AG04450 (cell line): ENCODE measurements at regions of chr1 and their contacts with region 1.

Region 1: DNA sequence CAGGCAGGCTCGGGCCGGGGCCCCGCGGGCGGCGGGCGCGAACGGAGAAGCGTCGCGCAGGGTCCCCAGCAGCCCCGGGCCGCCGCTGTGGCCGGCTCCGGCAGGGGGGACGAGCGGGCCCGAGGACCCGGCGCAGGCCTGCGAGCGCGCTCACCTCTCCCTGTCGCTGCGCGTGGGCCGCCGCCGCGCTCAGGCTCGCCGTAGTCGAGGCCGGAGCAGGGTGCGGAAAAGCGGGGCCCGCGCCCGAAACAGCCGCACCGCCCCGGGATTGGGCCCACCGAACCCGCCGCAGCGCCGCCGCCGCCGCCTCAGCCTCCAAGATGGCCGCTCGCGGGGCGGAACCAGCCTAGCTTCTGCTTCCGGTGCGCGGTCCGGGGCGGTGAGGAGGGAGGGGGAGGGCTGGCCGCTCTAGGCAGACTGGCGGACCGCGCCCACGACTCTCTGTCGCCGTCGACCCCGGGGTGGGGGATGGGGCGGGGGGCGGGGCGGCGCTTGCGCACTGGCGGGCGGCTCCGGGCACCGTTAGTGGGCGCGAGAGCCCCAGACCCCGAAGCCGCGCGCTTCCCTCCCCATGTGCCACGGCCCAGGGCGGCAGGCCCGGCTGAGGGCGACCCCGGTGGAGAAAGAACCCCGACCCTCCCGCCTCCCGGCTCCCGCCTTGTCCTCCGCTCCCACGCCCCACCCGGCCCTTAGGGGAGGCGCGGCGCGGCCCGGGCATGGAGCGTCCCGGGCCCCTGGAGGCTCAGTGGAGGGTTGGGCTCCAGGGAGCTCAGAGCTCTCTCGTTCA is at the start of gene UBE2J2:
- DNase-seq: peak; percentile 85
- H3K4me3 ChIP-seq: peak within 1 kb of the TSS; percentile 87
- H3K27ac ChIP-seq: peak within 1 kb of the TSS; percentile 61
- H3K27me3 ChIP-seq: no peaks in the 10 kb centered on the region
- CTCF ChIP-seq: no peak
- polyA plus RNA-seq, gene UBE2J2: 31.1 and 31.4 TPM in 2 replicates

Region 2: DNA sequence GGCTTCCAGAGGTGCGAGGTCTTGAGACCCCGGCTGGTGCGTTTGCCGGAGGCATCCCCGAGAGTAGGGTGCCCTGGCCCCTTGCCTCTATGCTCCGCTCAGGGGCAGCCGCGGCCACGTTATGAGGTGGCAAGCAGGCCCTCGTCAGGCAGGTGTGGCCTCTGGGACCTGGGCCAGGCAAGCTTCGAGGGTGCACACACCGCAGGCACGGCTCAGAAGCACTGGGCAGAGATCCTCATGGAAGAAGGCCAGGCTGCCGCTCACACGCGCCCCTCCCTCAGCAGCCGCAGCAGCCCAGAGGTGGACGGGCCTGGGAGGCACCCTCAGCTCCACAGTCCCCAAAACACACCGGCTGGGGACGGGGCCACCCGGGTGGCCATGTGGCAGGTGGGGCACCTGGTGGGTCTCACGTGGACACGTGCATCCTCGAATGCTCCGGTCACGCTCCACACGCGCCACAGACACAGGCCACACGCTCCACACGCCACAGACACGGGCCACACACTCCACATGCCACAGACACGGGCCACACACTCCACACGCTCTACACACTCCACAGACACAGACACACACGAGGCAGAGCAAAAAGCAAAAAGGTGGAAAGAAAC is 48.4 kb before region 1 on chr1:
- CTCF ChIA-PET with region 1: no interaction called
- POLR2A ChIA-PET with region 1: no interaction called
- DNase-seq: no peak
- H3K4me3 ChIP-seq: no peak overlapping the region
- H3K27ac ChIP-seq: no peak overlapping the region
- H3K27me3 ChIP-seq: no peaks in the 10 kb centered on the region
- CTCF ChIP-seq: no peak

Region 3: DNA sequence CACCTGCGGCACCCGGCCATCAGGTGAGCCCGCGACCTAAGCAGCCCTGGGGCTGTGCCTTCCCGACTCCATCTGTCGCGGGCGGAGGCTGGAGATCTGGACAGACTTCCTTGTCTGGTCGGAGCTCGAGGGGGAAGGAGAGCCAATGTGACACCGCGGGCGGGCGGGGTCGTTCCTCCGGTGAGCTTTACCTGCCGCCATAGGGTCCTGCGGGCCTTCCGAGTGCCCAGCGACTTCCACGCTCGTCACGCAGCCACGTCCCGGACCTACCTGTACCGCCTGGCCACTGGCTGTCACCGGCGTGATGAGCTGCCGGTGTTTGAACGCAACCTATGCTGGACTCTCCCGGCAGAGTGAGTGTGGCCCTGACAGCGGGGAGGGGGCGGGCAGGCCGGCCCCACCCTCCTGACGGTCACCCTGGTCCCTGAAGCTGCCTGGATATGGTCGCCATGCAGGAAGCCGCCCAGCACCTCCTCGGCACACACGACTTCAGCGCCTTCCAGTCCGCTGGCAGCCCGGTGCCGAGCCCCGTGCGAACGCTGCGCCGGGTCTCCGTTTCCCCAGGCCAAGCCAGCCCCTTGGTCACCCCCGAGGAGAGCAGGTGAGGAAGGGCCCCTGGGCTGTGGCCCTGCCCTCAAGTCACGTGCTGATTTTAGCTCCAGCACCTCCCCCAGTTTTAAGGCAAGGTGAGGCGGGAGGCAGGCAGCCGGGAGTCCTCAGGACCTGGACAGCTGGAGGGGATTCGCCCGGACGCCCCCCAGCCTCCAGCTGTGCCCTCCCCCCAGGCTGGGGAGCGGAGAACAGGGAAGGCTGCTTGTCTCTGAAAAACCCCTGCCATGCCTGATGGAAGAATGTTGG is 35.8 kb after region 1 on chr1:
- CTCF ChIA-PET with region 1: no interaction called
- POLR2A ChIA-PET with region 1: interaction called, 12 read pairs
- DNase-seq: no peak
- H3K4me3 ChIP-seq: peak overlapping the region; percentile 70
- H3K27ac ChIP-seq: no peak overlapping the region
- H3K27me3 ChIP-seq: no peaks in the 10 kb centered on the region
- CTCF ChIP-seq: no peak